ENCODE measurements at regions of chr1 and their contacts with region 1.

Region 1: DNA sequence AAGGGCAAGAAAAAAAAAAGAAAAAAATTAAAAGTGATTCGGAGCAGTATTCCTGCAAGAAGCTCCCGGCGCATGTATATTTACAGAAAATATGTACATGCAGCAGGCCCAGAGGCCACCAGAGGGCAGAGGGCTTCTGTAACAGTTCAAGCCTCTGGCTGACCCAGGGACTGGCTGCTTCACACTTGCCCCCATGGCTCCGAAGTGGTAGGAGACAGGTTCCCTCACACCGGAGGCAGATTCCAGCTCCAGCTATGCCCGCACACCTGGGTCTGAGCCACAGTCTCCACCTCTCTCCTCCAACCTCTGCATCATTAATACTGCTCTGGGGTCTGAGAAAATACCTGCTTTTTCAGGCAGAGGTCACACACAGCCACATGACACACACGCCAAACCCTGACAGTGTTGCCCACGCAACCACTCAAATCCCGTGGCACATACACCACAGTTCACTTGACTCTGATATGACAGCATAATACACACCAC is 2.2 kb upstream of the ARHGAP30 start:
- DNase-seq: peak; percentile 19 to 75 (median 54)
- ATAC-seq: no peak
- H3K4me3 ChIP-seq: no peak overlapping the region
- H3K4me3 Mint-ChIP-seq: no peak overlapping the region
- H3K27ac ChIP-seq: no peak overlapping the region
- H3K27ac Mint-ChIP-seq: peak overlapping the region; percentile 83
- H3K4me1 ChIP-seq: peaks cover 31% of the 10 kb centered on the region
- H3K4me1 Mint-ChIP-seq: peaks cover 40% of the 10 kb centered on the region
- H3K27me3 ChIP-seq: no peaks in the 10 kb centered on the region
- H3K27me3 Mint-ChIP-seq: no peaks in the 10 kb centered on the region
- CTCF ChIP-seq: peak; percentile 70

Region 2: DNA sequence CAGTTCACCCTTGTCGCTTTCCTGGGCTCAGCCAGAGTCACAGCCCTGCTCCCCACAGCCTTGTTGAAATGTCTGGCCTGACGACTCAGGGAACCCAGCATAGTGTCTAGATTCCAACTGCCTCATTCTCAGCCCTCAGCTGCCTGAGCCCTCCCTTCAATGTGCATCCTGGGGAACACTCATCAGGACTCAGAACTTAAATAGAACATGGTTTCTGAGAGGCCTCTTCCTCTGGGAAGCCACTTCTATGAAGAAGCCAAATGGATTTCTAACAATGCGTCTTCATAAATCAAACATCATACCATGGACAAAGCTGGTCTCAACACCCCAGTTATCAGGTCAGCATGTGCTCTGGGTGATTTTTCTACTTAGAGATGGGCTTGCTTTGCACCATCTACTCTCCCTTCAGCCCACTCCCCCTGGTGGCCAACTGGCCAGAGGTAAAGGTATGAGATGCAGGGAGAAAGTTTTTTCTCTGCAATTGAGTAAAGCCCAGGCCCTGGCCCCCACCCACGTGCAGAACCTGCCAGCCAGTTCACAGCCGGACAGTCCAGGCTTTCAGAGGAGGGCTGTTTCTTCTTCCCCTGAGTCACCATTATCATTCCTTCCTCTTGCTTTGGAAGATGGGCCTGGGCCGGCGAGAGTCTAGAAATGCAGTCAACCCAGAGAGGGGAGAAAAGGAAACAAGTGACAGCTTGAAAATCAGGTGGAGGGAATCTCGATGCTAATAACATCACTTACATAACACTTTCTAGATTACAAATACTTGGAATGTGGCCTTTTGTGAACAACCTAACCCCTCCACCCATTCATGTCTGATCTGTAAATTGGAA is 241.4 kb before region 1 on chr1:
- CTCF ChIA-PET with region 1: no interaction called
- POLR2A ChIA-PET with region 1: no interaction called
- intact Hi-C with region 1: no loop called
- DNase-seq: peak; percentile 52 to 87 (median 80)
- ATAC-seq: peak; percentile 70
- H3K4me3 ChIP-seq: no peak overlapping the region
- H3K4me3 Mint-ChIP-seq: no peak overlapping the region
- H3K27ac ChIP-seq: peak overlapping the region in 1 of 2 experiments; percentile 15
- H3K27ac Mint-ChIP-seq: peak overlapping the region; percentile 86
- H3K4me1 ChIP-seq: peaks cover 25% of the 10 kb centered on the region
- H3K4me1 Mint-ChIP-seq: peaks cover 58% of the 10 kb centered on the region
- H3K27me3 ChIP-seq: no peaks in the 10 kb centered on the region
- H3K27me3 Mint-ChIP-seq: no peaks in the 10 kb centered on the region
- CTCF ChIP-seq: peak; percentile 73

Region 3: DNA sequence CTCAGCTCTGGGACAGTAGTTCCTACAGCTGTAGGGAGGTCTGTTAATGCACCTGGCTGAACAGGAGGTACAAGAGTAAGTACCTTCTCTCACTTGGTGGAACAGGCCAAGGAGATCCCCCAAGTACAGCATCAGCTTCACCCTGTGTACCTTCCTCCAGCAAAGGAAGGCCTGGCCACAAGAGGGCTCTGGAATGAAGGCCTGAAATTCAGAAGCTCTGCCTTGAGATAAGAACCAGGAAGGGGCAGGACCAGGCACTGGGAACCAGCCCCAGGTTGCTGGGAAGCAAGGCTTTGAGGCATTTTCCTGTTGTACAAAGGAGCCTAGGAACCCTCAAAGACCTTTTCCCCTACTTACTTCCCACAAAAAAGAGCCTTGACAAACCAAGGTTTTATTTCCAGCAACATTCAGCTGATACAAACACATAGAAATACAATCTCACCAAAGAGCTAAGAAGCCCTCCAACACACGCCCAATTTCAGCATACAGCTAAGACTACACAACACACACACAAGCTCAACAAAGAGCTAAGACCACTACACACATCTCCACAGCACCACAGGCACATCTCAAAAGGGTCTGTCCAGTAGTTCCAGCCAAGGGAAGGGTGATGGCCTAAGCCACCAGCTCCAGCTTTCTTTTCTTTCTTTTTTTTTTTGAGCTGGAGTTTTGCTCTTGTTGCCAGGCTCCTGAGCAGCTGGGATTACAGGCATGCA is 74.4 kb before region 1 on chr1:
- CTCF ChIA-PET with region 1: interaction called, 14 read pairs
- POLR2A ChIA-PET with region 1: interaction called, 8 read pairs
- intact Hi-C with region 1: loop called in 1 of 2 experiments (anchors 1 kb)
- DNase-seq: peak in 8 of 9 experiments; percentile 37 to 71 (median 56)
- ATAC-seq: peak; percentile 82
- H3K4me3 ChIP-seq: no peak overlapping the region
- H3K4me3 Mint-ChIP-seq: no peak overlapping the region
- H3K27ac ChIP-seq: no peak overlapping the region
- H3K27ac Mint-ChIP-seq: peak overlapping the region; percentile 29
- H3K4me1 ChIP-seq: no peaks in the 10 kb centered on the region
- H3K4me1 Mint-ChIP-seq: peaks cover 5% of the 10 kb centered on the region
- H3K27me3 ChIP-seq: no peaks in the 10 kb centered on the region
- H3K27me3 Mint-ChIP-seq: no peaks in the 10 kb centered on the region
- CTCF ChIP-seq: peak; percentile 30

Region 4: DNA sequence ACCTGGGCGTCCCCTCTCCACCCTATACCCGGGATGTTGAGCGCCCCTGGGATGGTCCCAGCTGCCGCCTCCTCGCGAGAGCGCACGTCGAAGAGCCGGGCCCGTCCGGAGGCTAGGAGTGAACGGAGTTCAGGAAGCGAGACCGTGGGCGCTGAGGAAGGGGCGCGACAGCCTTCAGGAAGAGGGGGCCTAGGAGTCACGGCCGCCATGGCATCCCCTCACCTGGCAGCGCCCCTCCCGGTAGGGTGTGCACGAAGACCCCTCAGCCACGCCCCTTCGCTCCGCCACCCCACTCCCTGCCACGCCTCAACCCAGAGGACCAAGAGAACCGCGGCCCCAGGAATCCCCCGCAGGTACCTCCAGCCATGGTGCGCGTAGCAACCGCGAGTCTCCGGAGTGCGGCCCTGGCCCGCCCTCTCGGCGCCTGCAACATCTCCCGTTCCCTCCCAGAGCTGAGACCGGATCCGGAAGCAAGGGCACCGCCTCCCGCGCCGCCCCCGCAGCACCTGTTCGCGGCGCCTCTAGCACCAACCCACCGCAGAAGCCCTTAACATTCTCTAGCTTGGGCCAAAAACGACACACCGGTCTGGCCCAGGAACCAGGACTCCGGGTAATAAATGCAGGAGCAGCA is 33.3 kb before region 1 on chr1 and contains the start of gene TSTD1:
- CTCF ChIA-PET with region 1: interaction called, 121 read pairs
- POLR2A ChIA-PET with region 1: interaction called, 189 read pairs
- intact Hi-C with region 1: no loop called
- DNase-seq: peak; percentile 68 to 95 (median 86)
- ATAC-seq: peak; percentile 88
- H3K4me3 ChIP-seq: peak within 1 kb of the TSS; percentile 87 to 89
- H3K4me3 Mint-ChIP-seq: peak within 1 kb of the TSS; percentile 90
- H3K27ac ChIP-seq: peak within 1 kb of the TSS; percentile 75 to 83
- H3K27ac Mint-ChIP-seq: peak within 1 kb of the TSS; percentile 96
- H3K4me1 ChIP-seq: peaks cover 35% of the 10 kb centered on the region
- H3K4me1 Mint-ChIP-seq: peaks cover 56% of the 10 kb centered on the region
- H3K27me3 ChIP-seq: no peaks in the 10 kb centered on the region
- H3K27me3 Mint-ChIP-seq: no peaks in the 10 kb centered on the region
- CTCF ChIP-seq: no peak
- total RNA-seq, gene TSTD1: 44.8 to 46.6 TPM

Region 5: DNA sequence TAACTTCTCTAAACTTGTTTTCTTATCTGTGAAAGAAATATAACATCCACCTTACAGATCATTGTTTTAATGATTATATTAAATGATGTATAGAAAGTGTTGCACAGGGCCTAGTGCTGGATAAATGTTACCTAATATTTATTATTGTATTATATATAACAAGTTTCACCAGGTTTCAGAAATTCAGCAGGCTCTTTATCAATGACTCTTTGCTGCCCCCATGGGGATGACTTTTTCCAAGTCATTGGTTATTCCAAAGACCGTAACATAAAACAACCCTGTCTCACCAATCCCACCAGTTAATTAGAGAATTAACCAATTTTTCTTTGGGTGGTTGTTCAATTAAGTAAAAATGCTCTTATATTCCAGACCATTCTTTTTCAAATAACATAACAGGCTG is 67.8 kb after region 1 on chr1:
- CTCF ChIA-PET with region 1: interaction called, 6 read pairs
- POLR2A ChIA-PET with region 1: no interaction called
- intact Hi-C with region 1: loop called in 1 of 2 experiments (anchors 5 kb)
- DNase-seq: peak in 6 of 9 experiments; percentile 16 to 67 (median 46)
- ATAC-seq: no peak
- H3K4me3 ChIP-seq: no peak overlapping the region
- H3K4me3 Mint-ChIP-seq: no peak overlapping the region
- H3K27ac ChIP-seq: no peak overlapping the region
- H3K27ac Mint-ChIP-seq: no peak overlapping the region
- H3K4me1 ChIP-seq: no peaks in the 10 kb centered on the region
- H3K4me1 Mint-ChIP-seq: peaks cover 10% of the 10 kb centered on the region
- H3K27me3 ChIP-seq: no peaks in the 10 kb centered on the region
- H3K27me3 Mint-ChIP-seq: no peaks in the 10 kb centered on the region
- CTCF ChIP-seq: peak; percentile 53

Region 6: DNA sequence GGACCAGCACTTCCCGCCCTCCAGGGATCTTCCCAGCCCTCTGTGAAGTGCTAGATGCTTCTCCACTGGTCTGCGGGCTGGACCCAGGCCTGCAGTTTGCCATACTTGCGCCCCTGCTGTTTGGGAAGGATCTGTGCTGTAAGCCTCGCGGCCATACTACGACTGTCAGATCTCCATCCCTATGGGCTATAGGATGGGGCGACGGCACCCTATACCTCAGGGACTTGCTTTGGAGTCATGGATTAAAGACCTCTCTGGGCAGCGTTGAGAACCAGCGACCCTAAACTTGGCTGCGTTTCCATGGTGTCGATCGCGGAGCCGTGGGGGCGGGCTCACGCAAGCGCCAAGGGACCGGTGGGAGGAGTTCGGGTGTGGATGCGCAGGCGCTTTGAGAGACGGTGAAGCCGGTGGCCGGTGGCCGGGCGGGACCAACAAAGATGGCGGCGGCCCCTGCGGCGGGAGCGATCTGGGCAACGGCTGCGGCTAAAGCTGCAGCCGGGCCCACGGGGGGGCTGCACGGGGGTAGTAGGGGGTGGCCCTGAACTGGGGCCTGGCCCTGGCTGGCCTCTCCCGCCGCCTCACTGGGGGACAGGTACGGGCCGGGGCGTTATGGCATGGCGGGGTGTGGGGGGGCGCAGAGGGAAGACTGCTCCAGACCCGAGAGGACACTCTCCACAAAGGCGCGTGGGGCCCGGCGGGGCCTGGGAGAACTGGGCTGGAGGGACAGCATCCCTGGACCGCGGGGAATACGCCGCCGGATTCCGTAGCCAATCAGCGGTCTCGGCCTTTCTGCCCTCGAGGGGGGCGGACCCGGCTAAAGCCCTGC is 87.4 kb after region 1 on chr1 and contains the start of gene USP21:
- CTCF ChIA-PET with region 1: interaction called, 4 read pairs
- POLR2A ChIA-PET with region 1: interaction called, 20 read pairs
- intact Hi-C with region 1: loop called in 1 of 2 experiments (anchors 5 kb)
- DNase-seq: peak; percentile 84 to 95 (median 93)
- ATAC-seq: peak; percentile 96
- H3K4me3 ChIP-seq: peak within 1 kb of the TSS; percentile 76 to 82
- H3K4me3 Mint-ChIP-seq: peak within 1 kb of the TSS; percentile 94
- H3K27ac ChIP-seq: peak within 1 kb of the TSS; percentile 72 to 82
- H3K27ac Mint-ChIP-seq: peak within 1 kb of the TSS; percentile 95
- H3K4me1 ChIP-seq: peaks cover 37% of the 10 kb centered on the region
- H3K4me1 Mint-ChIP-seq: peaks cover 58% of the 10 kb centered on the region
- H3K27me3 ChIP-seq: no peaks in the 10 kb centered on the region
- H3K27me3 Mint-ChIP-seq: no peaks in the 10 kb centered on the region
- CTCF ChIP-seq: no peak
- total RNA-seq, gene USP21: 34.8 to 38.1 TPM